PC-9 (cell line): ENCODE measurements at regions of chr9 and their contacts with region 1.

Region 1: GRCh38 chr9:112711050-112711689 is 6.7 kb downstream of the INIP start:
- DNase-seq: peak in 1 of 2 experiments; percentile 9
- H3K4me3 ChIP-seq: no peak overlapping the region
- H3K27ac ChIP-seq: no peak overlapping the region
- H3K4me1 ChIP-seq: peaks cover 2% of the 10 kb centered on the region; the same call in 1 of the 2 replicates
- H3K27me3 ChIP-seq: no peaks in the 10 kb centered on the region
- CTCF ChIP-seq: peak; percentile 67

Region 2: GRCh38 chr9:112443200-112443599 is 268.0 kb before region 1 on chr9:
- CTCF ChIA-PET with region 1: interaction called, 4 read pairs
- POLR2A ChIA-PET with region 1: no interaction called
- intact Hi-C with region 1: loop called (anchors 5 kb)
- DNase-seq: no peak
- H3K4me3 ChIP-seq: no peak overlapping the region
- H3K27ac ChIP-seq: no peak overlapping the region
- H3K4me1 ChIP-seq: no peaks in the 10 kb centered on the region
- H3K27me3 ChIP-seq: no peaks in the 10 kb centered on the region
- CTCF ChIP-seq: 0 out of 2 replicates have a peak, but pooled peaks have one; percentile 47

Region 3: GRCh38 chr9:112477330-112477729 is 233.8 kb before region 1 on chr9:
- CTCF ChIA-PET with region 1: no interaction called
- POLR2A ChIA-PET with region 1: interaction called, 14 read pairs
- intact Hi-C with region 1: no loop called
- DNase-seq: no peak
- H3K4me3 ChIP-seq: no peak overlapping the region
- H3K27ac ChIP-seq: no peak overlapping the region
- H3K4me1 ChIP-seq: no peaks in the 10 kb centered on the region
- H3K27me3 ChIP-seq: no peaks in the 10 kb centered on the region
- CTCF ChIP-seq: no peak